Activated B cell treated with CpG ODN at 0.5 μM for 24 hours (primary cell): ENCODE measurements at regions of chr3 and their contacts with region 1.

Region 1: GRCh38 chr3:105366326-105367062 is at the start of gene ALCAM:
- DNase-seq: peak; percentile 80
- ATAC-seq: peak; percentile 62
- H3K4me3 Mint-ChIP-seq: peak within 1 kb of the TSS; percentile 97
- H3K27ac Mint-ChIP-seq: peak within 1 kb of the TSS; percentile 99
- H3K4me1 Mint-ChIP-seq: peaks cover 33% of the 10 kb centered on the region
- H3K27me3 Mint-ChIP-seq: no peaks in the 10 kb centered on the region
- CTCF ChIP-seq: no peak
- total RNA-seq, gene ALCAM: 27.6 and 28.5 TPM in 2 replicates

Region 2: DNA sequence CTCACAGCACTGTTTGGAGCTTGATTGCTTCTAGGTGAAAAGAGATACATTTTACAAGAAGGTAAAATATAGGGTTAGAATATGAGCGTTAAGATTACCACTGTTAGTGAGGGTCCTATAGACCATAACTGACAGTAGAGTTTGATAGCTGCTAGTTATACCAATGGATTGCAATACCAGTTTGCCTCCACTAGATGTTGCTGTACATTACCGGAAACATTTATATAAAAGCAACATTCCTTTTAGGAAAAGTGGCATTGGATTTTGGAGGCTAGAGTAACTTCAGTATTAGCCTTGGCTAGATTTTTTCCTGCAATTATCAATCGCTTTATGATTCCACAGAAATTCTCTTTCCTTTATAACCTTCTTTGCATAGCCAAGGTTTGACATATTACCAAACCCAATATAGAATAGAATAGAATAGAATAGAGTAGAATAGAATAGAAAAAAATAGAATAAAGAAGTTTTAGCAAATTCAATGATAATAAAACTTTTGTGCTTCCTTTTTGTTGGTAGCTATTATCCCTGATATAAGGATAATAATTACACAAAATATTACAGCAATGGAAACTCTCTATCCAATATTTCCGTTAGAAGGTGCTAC is 1093.3 kb before region 1 on chr3:
- CTCF ChIA-PET with region 1: interaction called, 11 read pairs
- POLR2A ChIA-PET with region 1: no interaction called
- intact Hi-C with region 1: loop called (anchors 1 kb)
- DNase-seq: no peak
- ATAC-seq: peak; percentile 56
- H3K4me3 Mint-ChIP-seq: no peak overlapping the region
- H3K27ac Mint-ChIP-seq: no peak overlapping the region
- H3K4me1 Mint-ChIP-seq: no peaks in the 10 kb centered on the region
- H3K27me3 Mint-ChIP-seq: no peaks in the 10 kb centered on the region
- CTCF ChIP-seq: peak; percentile 72

Region 3: GRCh38 chr3:104628185-104628789 is 738.2 kb before region 1 on chr3:
- CTCF ChIA-PET with region 1: interaction called, 3 read pairs
- POLR2A ChIA-PET with region 1: interaction called, 7 read pairs
- intact Hi-C with region 1: loop called (anchors 1 kb)
- DNase-seq: no peak
- ATAC-seq: peak; percentile 45
- H3K4me3 Mint-ChIP-seq: no peak overlapping the region
- H3K27ac Mint-ChIP-seq: no peak overlapping the region
- H3K4me1 Mint-ChIP-seq: peaks cover 5% of the 10 kb centered on the region
- H3K27me3 Mint-ChIP-seq: no peaks in the 10 kb centered on the region
- CTCF ChIP-seq: no peak

Region 4: DNA sequence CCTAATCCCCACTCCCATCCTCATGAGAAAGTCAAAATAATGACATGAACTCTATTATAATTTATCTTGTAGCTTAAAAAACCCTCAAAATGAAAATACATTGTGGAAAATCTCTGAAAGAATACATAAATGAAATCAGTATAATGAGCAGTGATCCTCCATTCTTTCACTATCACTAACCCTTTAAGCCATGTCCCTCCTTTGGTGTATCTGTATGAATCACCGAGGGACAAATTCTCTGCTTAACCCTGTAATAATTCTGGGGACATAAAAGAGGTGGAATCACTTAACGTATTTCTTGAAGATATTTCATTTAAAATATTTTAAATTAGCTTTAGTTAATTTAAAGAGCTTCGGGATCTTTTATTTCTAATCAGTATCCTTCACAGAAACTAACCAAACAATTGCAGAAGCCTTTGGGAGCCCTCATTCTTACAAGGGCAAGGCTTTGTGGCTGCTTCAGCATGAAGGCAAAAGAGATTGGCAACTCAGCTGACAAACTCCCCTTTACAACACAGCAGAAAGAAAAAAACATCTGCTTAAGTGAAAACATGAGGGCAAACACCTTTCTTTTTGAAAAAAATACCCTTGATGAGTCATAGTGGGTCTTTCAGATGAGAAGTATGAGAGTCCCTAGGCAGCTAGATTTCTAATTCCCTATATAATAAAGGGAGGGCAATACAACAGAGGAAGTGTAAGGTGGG is 43.8 kb before region 1 on chr3:
- CTCF ChIA-PET with region 1: no interaction called
- POLR2A ChIA-PET with region 1: interaction called, 4 read pairs
- intact Hi-C with region 1: loop called (anchors 2 kb)
- DNase-seq: no peak
- ATAC-seq: peak; percentile 85
- H3K4me3 Mint-ChIP-seq: no peak overlapping the region
- H3K27ac Mint-ChIP-seq: peak overlapping the region; percentile 50
- H3K4me1 Mint-ChIP-seq: peaks cover 6% of the 10 kb centered on the region
- H3K27me3 Mint-ChIP-seq: no peaks in the 10 kb centered on the region
- CTCF ChIP-seq: no peak

Region 5: DNA sequence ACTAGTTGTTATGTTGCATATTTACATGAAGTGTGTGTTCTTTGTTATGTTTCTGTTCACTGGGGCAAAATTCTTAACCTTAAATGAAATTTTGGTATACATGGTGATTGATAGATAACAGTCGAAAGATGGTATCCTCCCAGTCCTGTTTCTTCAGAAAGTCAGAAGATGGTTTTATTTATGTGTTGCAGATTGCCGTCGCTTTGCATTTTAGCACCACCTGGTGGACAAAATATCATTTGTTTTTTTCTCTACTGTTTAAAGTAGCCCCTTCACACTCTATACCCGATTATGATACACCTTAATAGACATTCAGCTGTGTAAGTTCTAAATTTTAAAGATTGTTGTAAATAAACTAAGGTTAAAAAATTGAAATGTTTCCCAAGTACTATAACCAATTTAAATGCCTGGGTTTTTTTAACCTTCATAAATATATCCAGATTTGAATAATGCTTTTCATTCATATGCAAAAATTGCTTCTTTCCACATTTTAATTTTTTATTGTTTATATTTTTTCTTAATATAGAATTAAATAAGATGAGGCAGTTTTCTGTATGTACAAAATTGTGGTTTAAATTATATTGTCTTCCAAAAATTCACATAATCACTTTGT is 152.4 kb after region 1 on chr3:
- CTCF ChIA-PET with region 1: interaction called, 8 read pairs
- POLR2A ChIA-PET with region 1: no interaction called
- intact Hi-C with region 1: loop called (anchors 1 kb)
- DNase-seq: no peak
- ATAC-seq: peak; percentile 65
- H3K4me3 Mint-ChIP-seq: no peak overlapping the region
- H3K27ac Mint-ChIP-seq: no peak overlapping the region
- H3K4me1 Mint-ChIP-seq: peaks cover 7% of the 10 kb centered on the region
- H3K27me3 Mint-ChIP-seq: no peaks in the 10 kb centered on the region
- CTCF ChIP-seq: no peak

Region 6: GRCh38 chr3:105862217-105862616 is 495.7 kb after region 1 on chr3:
- CTCF ChIA-PET with region 1: no interaction called
- POLR2A ChIA-PET with region 1: no interaction called
- intact Hi-C with region 1: no loop called
- DNase-seq: no peak
- ATAC-seq: peak; percentile 94
- H3K4me3 Mint-ChIP-seq: no peak overlapping the region
- H3K27ac Mint-ChIP-seq: no peak overlapping the region
- H3K4me1 Mint-ChIP-seq: peaks cover 50% of the 10 kb centered on the region
- H3K27me3 Mint-ChIP-seq: no peaks in the 10 kb centered on the region
- CTCF ChIP-seq: no peak

Region 7: GRCh38 chr3:106161246-106161645 is 794.8 kb after region 1 on chr3:
- CTCF ChIA-PET with region 1: no interaction called
- POLR2A ChIA-PET with region 1: no interaction called
- intact Hi-C with region 1: no loop called
- DNase-seq: no peak
- ATAC-seq: no peak
- H3K4me3 Mint-ChIP-seq: no peak overlapping the region
- H3K27ac Mint-ChIP-seq: no peak overlapping the region
- H3K4me1 Mint-ChIP-seq: no peaks in the 10 kb centered on the region
- H3K27me3 Mint-ChIP-seq: no peaks in the 10 kb centered on the region
- CTCF ChIP-seq: no peak

Region 8: GRCh38 chr3:106176734-106177133 is 810.2 kb after region 1 on chr3:
- CTCF ChIA-PET with region 1: no interaction called
- POLR2A ChIA-PET with region 1: no interaction called
- intact Hi-C with region 1: loop called (anchors 10 kb)
- DNase-seq: no peak
- ATAC-seq: peak; percentile 77
- H3K4me3 Mint-ChIP-seq: peak overlapping the region; percentile 60
- H3K27ac Mint-ChIP-seq: peak overlapping the region; percentile 81
- H3K4me1 Mint-ChIP-seq: peaks cover 38% of the 10 kb centered on the region
- H3K27me3 Mint-ChIP-seq: no peaks in the 10 kb centered on the region
- CTCF ChIP-seq: no peak